Dendritic cell treated with granulocyte-macrophage colony-stimulating factor and Interleukin-4, amounts not matched to agents 40 ng/mL and 50 ng/mL, for 4 days (primary cell): ENCODE measurements at regions of chr4 and their contacts with region 1.

Region 1: DNA sequence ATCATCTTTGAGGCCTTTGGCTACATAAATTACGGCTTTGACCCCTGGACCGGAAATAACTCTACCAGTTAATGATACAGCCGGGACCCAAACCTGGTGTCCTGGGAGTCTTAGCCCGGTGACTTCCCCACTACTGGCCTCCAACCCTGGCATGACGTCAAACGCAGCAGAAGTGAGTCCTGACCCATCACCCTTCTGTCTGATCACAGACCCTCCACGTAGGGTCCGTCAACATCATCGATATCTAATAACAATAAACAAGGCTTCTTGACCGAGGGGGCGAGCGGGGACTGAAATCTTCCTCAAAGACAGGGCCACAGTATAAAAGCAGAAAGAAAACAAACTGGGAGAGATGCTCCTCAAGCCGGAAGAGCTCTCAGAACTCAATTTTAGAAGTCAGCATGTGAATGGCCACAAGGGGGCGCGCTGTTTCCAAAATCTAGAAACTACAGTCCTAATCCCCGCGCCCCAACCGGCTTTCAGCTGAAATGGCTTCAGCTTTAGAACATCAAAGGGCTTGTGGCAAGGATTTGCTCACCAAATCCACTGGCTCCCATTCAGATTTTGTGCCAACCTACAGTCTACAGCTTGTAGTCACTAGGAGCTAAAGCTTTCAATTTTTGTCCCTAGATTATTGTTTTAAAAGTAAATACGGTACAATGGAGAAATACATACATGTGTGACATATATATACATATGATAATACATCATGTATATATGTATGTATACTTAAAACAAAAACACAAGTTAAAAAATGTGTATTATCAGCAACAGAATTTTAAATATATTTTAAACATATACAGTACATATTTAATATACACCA is 46.4 kb upstream of the ENPP6 start:
- H3K4me3 Mint-ChIP-seq: no peak overlapping the region
- H3K27ac Mint-ChIP-seq: no peak overlapping the region
- H3K4me1 Mint-ChIP-seq: peaks cover 42% of the 10 kb centered on the region
- H3K27me3 Mint-ChIP-seq: no peaks in the 10 kb centered on the region

Region 2: GRCh38 chr4:184066584-184067300 is 197.4 kb before region 1 on chr4:
- intact Hi-C with region 1: no loop called
- H3K4me3 Mint-ChIP-seq: no peak overlapping the region
- H3K27ac Mint-ChIP-seq: no peak overlapping the region
- H3K4me1 Mint-ChIP-seq: no peaks in the 10 kb centered on the region
- H3K27me3 Mint-ChIP-seq: peaks cover 1% of the 10 kb centered on the region

Region 3: GRCh38 chr4:184343502-184344177 is 79.5 kb after region 1 on chr4:
- intact Hi-C with region 1: loop called (anchors 2 kb)
- H3K4me3 Mint-ChIP-seq: peak overlapping the region; percentile 84
- H3K27ac Mint-ChIP-seq: peak overlapping the region; percentile 94
- H3K4me1 Mint-ChIP-seq: peaks cover 71% of the 10 kb centered on the region
- H3K27me3 Mint-ChIP-seq: no peaks in the 10 kb centered on the region

Region 4: GRCh38 chr4:184392748-184393334 is 128.7 kb after region 1 on chr4:
- intact Hi-C with region 1: loop called (anchors 2 kb)
- H3K4me3 Mint-ChIP-seq: peak overlapping the region; percentile 69
- H3K27ac Mint-ChIP-seq: peak overlapping the region; percentile 96
- H3K4me1 Mint-ChIP-seq: peaks cover 74% of the 10 kb centered on the region
- H3K27me3 Mint-ChIP-seq: no peaks in the 10 kb centered on the region

Region 5: DNA sequence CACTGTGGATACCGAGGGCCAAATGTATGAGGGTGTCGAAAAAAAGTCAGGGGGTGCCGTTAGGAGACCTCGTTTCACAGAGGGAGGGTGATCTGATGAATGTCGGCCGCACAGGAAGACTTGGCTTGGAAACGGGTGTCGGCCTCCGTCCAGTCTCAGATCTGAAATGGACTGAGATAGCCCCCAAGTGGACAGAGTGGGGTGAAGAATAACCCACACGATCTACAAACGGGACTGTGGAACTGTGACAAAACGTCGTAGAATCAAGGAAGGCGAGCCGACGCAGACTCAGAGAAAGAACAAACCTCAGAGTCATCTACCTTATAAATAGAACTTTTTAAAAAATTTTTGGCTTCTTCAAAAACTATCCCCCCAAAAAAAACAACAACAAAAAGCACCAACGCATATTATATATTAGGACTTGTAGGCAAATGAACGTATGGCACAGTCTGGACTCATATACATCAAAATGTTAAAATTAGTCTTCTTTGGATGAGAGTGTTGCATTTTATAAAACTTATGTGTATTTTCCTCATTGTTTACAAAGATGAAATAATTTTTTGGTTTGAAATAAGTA is 274.0 kb after region 1 on chr4:
- intact Hi-C with region 1: loop called (anchors 1 kb)
- H3K4me3 Mint-ChIP-seq: peak overlapping the region; percentile 92
- H3K27ac Mint-ChIP-seq: peak overlapping the region; percentile 97
- H3K4me1 Mint-ChIP-seq: peaks cover 31% of the 10 kb centered on the region
- H3K27me3 Mint-ChIP-seq: no peaks in the 10 kb centered on the region

Region 6: DNA sequence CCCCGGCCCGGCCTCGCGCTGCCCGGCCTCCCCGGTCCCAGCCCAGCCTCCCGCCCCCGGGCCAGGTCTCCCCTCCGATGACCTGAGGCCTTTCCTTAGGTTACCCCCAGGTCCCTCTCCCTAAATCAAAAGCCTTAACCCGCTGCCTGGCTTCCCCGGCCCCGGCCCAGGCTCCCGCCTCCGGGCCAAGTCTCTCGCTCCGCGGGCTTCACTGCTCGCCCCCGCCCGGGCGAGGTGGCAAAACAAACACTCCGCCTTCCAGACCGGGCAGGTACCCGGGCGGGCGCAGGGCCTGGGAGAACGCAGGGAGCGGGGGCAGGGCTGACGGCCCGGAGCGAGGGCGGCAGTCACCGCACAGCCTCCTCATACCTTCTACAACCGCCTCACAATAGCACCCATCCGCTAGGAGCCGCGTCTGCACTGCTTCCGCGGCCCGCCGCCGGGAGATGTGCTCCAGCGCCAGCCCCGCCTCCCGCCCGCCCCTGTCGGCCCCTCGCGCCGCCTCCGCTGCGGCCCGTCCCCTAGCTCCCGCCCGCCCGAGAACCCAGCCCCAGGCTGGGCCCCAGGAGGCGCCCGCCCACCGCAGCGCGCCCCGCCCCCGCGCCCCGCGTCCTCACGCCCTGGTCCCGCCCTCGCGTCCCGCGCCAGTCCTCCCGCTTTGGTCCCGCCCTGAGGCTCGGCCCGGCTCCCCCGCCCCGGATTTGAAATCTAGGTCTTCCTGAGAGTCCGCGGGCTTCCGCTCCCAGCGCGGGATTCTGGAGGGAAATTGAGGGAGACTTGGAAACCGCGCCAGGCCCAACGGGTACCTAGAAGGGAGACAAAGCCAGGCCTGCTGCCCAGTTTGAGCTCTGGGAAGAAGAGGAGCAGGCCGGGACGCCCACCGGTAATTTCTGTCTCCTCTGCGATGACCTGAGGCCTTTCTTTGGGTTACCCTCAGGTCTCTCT is 385.2 kb after region 1 on chr4 and contains the starts of genes CASP3 and PRIMPOL:
- intact Hi-C with region 1: loop called (anchors 5 kb)
- H3K4me3 Mint-ChIP-seq: peak within 1 kb of the TSS; percentile 87
- H3K27ac Mint-ChIP-seq: peak within 1 kb of the TSS; percentile 90
- H3K4me1 Mint-ChIP-seq: peaks cover 40% of the 10 kb centered on the region
- H3K27me3 Mint-ChIP-seq: no peaks in the 10 kb centered on the region

Region 7: GRCh38 chr4:184733654-184734524 is 469.8 kb after region 1 on chr4 and contains the start of gene CENPU:
- intact Hi-C with region 1: loop called (anchors 10 kb)
- H3K4me3 Mint-ChIP-seq: peak within 1 kb of the TSS; percentile 92
- H3K27ac Mint-ChIP-seq: peak within 1 kb of the TSS; percentile 88
- H3K4me1 Mint-ChIP-seq: peaks cover 24% of the 10 kb centered on the region
- H3K27me3 Mint-ChIP-seq: no peaks in the 10 kb centered on the region